HAP-1 (cell line): ENCODE measurements at regions of chr15 and their contacts with region 1.

Region 1: GRCh38 chr15:34900748-34901147 is 68.8 kb downstream of the AQR start:
- DNase-seq: no peak
- H3K4me3 ChIP-seq: no peak overlapping the region
- H3K4me1 ChIP-seq: no peaks in the 10 kb centered on the region
- H3K27me3 ChIP-seq: no peaks in the 10 kb centered on the region

Region 2: GRCh38 chr15:34055853-34056595 is 844.7 kb before region 1 on chr15:
- in situ Hi-C with region 1: loop called (anchors 25 kb)
- DNase-seq: no peak
- H3K4me3 ChIP-seq: no peak overlapping the region
- H3K4me1 ChIP-seq: no peaks in the 10 kb centered on the region
- H3K27me3 ChIP-seq: no peaks in the 10 kb centered on the region

Region 3: DNA sequence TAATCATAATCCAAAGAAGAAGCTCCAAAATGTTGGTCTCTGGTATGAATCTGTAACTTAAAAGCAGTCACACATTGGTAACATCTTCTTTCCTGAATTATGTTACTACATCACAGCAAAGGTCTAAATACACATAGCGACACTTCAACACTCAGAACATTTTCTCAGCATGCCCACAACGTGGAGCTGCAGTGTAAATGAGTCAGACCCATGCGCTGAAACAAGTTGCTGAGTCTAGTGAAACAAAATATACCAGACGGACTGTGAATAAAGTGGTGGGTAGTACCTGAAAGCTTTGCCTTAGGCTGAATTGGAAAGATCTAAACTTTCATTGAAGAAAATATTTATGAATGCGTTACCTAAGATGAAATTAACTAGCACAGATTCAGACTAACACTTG is 284.1 kb before region 1 on chr15:
- in situ Hi-C with region 1: loop called (anchors 25 kb)
- DNase-seq: no peak
- H3K4me3 ChIP-seq: no peak overlapping the region
- H3K4me1 ChIP-seq: no peaks in the 10 kb centered on the region; the same call in 1 of the 2 replicates
- H3K27me3 ChIP-seq: peaks cover 36% of the 10 kb centered on the region